ENCODE measurements at regions of chr6 and their contacts with region 1.

Region 1: GRCh38 chr6:24933868-24934401 is 1.8 kb downstream of the RIPOR2 start:
- H3K4me3 ChIP-seq: no peak overlapping the region
- H3K27ac ChIP-seq: no peak overlapping the region
- H3K4me1 ChIP-seq: no peaks in the 10 kb centered on the region
- CTCF ChIP-seq: no peak

Region 2: GRCh38 chr6:24494821-24495795 is 438.8 kb before region 1 on chr6 and contains the start of gene ALDH5A1:
- CTCF ChIA-PET with region 1: no interaction called
- POLR2A ChIA-PET with region 1: no interaction called
- H3K4me3 ChIP-seq: peak within 1 kb of the TSS; percentile 60
- H3K27ac ChIP-seq: peak within 1 kb of the TSS; percentile 80
- H3K4me1 ChIP-seq: 0 out of 2 replicates have a peak, but pooled peaks cover 2% of the 10 kb centered on the region
- CTCF ChIP-seq: peak; percentile 91

Region 3: GRCh38 chr6:24888715-24889370 is 45.1 kb before region 1 on chr6:
- CTCF ChIA-PET with region 1: interaction called, 16 read pairs
- POLR2A ChIA-PET with region 1: no interaction called
- H3K4me3 ChIP-seq: no peak overlapping the region
- H3K27ac ChIP-seq: no peak overlapping the region
- H3K4me1 ChIP-seq: no peaks in the 10 kb centered on the region
- CTCF ChIP-seq: no peak

Region 4: DNA sequence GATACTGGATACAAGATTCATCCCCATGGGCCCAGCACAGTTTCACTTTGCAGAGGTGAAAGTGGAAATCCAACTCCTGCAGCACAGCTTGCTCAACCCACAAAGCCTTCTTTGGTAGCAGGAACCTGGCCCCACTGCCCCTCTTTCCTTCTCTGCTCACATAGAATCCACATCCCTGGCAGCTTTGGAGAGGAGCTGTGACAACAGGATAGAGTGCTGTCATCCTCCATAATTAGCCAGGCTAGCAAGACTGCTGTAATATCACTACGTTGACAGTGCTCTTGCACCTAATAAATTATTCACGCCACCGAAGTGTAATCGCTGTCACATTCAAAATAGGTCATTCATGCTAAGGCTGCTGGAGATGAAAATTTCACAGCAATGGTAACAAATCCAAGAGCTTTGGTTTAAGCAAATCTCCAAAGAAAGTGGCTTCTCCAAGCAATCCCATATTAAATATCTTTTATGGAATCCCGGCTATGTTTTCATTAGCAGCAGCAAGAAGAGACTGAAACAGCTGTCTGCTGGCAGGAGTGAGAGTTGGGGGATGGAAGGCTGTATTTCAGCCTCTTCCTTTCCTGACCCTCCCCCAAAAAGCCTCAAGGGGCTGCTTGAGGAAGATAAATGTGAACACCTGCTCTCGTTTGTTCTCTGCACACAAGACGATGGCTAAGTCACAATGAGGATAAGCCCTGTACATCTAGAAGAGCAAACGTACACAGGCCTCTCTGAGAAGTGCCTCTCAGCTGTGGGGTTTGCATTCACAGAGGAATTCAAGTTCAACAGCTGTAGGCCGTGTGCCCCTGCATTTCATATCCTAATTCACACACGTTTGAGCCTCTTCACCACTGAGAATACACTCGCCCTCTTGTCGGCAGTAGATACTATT is 14.7 kb before region 1 on chr6:
- CTCF ChIA-PET with region 1: interaction called, 42 read pairs
- POLR2A ChIA-PET with region 1: no interaction called
- H3K4me3 ChIP-seq: no peak overlapping the region
- H3K27ac ChIP-seq: no peak overlapping the region
- H3K4me1 ChIP-seq: no peaks in the 10 kb centered on the region; the same call in 1 of the 2 replicates
- CTCF ChIP-seq: no peak

Region 5: DNA sequence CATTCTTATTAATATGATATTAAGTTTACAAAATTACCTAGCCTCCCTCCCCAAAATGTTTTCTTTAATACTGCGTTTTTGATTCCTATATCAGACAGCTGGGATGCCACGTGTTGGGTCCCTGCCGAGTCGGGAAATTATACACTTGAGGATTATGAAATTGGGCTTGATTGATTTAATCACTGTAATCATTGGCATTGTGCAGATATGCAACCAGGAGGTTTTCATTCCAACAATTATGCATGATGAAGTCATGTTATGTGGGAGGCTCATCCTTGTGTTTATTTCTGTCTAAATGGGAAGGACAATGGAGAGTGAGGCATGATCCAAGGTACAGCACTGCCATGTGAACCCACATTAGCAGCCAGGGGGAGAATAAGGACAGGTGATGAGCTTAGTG is 32.4 kb after region 1 on chr6:
- CTCF ChIA-PET with region 1: interaction called, 17 read pairs
- POLR2A ChIA-PET with region 1: no interaction called
- H3K4me3 ChIP-seq: no peak overlapping the region
- H3K27ac ChIP-seq: no peak overlapping the region
- H3K4me1 ChIP-seq: no peaks in the 10 kb centered on the region; the same call in 1 of the 2 replicates
- CTCF ChIP-seq: no peak

Measured in HEK293 (cell line).